HEK293 (cell line): ENCODE measurements at regions of chr4 and their contacts with region 1.

Region 1: DNA sequence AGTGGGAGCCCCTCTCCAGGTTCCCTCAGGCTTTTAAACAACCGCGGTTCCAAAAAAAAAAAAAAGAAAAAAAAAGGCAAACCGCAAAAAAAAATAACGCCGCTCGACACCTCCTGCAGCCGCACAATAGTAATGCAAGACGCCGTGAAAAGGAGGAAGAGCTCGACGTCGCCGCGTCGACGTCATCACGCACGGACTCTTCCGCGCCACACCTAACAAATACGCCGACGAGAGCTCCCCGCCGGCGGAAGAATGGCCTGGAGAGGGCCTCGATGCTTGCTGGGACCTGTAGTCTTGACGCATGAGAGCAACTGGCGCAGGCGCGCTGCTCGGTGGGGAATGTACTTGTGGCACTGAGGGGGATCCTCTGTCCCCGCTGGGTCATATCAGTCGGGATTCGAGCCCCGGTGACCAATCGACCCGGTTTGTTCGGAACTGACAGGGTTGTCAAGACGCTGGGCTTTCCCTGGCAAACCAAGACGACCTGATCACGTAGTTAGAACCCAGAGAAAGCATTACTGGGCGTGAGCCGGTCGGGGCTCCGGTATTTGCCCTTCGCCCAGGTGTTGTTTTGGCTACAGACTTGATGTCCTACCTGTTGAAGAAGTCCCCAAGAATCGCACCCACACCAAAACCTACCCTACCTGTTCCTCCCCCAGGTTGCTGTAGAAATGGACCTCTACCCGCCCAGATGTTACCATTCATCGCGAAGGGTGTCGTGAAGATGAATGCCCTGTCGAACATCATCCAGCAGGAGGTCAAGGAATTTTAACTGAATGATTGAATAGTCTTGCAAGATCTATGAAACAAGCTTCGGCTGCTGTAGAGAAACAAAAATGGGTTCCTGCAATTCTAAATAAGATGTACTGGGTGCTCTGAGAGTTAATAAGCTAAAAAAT is at the start of gene CBR4:
- H3K4me3 ChIP-seq: peak within 1 kb of the TSS; percentile 72
- H3K27ac ChIP-seq: peak within 1 kb of the TSS; percentile 57
- H3K4me1 ChIP-seq: peaks cover 6% of the 10 kb centered on the region; the same call in 1 of the 2 replicates
- CTCF ChIP-seq: no peak

Region 2: GRCh38 chr4:168815379-168816345 is 194.7 kb before region 1 on chr4:
- CTCF ChIA-PET with region 1: no interaction called
- POLR2A ChIA-PET with region 1: no interaction called
- H3K4me3 ChIP-seq: no peak overlapping the region
- H3K27ac ChIP-seq: no peak overlapping the region; the same call in 1 of the 2 replicates
- H3K4me1 ChIP-seq: peaks cover 15% of the 10 kb centered on the region
- CTCF ChIP-seq: no peak

Region 3: GRCh38 chr4:168999809-169000208 is 10.6 kb before region 1 on chr4:
- CTCF ChIA-PET with region 1: interaction called, 3 read pairs
- POLR2A ChIA-PET with region 1: interaction called, 18 read pairs
- H3K4me3 ChIP-seq: no peak overlapping the region
- H3K27ac ChIP-seq: no peak overlapping the region
- H3K4me1 ChIP-seq: no peaks in the 10 kb centered on the region
- CTCF ChIP-seq: no peak

Region 4: DNA sequence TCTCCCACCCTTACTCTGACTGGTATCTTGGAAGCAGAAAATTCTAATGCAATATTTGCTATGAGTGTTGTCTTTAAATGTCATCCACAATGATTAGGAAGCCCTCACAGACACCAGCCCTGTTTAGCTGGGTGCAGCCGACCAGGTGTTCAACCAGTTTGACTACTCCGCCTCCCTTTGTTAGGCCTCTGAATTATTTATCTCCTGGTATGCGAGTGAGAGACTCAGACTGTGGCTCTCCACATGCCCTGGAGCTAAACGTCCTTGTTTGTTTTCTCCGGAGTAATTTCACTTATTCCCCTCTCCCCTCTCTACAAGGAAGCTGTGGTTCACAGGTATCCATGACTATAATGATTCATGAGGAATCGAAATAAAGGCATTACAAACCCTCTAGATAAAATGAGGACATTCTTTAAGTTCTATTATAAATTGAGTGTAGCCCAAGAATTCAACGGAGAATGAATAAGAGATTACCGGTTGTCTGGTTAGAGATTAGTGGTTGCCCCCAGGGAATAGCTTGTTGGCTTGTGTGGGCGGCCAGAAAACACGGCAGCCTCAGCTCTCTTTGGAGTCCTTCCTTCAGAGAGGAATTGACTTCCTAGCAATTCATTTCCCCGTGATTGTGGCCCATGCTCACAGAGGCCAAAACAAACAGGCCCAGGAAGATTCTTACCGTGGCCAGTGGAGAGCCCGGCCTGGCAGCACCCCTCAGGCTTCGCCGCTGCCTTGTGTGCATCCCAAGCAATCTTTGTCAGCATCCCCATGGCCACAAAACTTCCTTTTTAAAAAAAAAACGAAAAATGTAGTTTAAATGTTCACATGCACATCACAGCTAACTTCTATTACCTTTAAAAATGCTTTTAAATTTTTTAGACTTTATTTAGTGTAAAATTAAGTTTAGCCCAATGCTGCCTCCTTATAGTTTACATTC is 59.9 kb after region 1 on chr4:
- CTCF ChIA-PET with region 1: no interaction called
- POLR2A ChIA-PET with region 1: interaction called, 11 read pairs
- H3K4me3 ChIP-seq: no peak overlapping the region; the same call in 1 of the 2 replicates
- H3K27ac ChIP-seq: peak overlapping the region; percentile 32
- H3K4me1 ChIP-seq: peaks cover 5% of the 10 kb centered on the region
- CTCF ChIP-seq: no peak

Region 5: DNA sequence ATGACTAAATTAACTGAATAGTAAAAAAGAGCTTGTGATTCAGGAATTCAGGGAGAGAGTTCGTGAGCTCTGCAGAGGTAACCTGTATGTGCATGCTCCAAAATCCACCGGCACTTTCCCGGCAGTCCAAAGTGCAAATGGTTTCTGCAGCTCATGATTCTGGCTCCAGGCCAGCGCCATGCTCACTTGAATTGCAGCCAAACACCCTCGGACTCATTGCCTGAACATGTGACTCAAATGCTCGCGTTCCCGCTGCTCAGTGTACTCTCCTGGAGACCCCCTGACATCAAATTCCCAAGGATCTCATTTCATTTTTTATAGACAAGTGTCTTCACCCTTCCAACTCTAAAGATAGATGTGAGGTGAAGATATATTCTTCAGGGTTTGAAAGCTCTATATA is 304.5 kb after region 1 on chr4:
- CTCF ChIA-PET with region 1: no interaction called
- POLR2A ChIA-PET with region 1: interaction called, 10 read pairs
- H3K4me3 ChIP-seq: no peak overlapping the region
- H3K27ac ChIP-seq: no peak overlapping the region
- H3K4me1 ChIP-seq: peaks cover 18% of the 10 kb centered on the region
- CTCF ChIP-seq: no peak